IMR-90 (cell line): ENCODE measurements at regions of chr3 and their contacts with region 1.

Region 1: GRCh38 chr3:8441969-8442559 is 59.6 kb upstream of the LMCD1 start:
- DNase-seq: peak; percentile 77
- ATAC-seq: peak; percentile 30; the same call in 1 of the 2 replicates
- H3K4me3 ChIP-seq: no peak overlapping the region
- H3K27ac ChIP-seq: peak overlapping the region; percentile 40; the same call in 1 of the 2 replicates
- H3K4me1 ChIP-seq: peaks cover 21% of the 10 kb centered on the region
- H3K27me3 ChIP-seq: peaks cover 2% of the 10 kb centered on the region; the same call in 1 of the 2 replicates
- CTCF ChIP-seq: peak; percentile 84
- POLR2A ChIP-seq: no peak
- RAD21 ChIP-seq: peak; percentile 87

Region 2: DNA sequence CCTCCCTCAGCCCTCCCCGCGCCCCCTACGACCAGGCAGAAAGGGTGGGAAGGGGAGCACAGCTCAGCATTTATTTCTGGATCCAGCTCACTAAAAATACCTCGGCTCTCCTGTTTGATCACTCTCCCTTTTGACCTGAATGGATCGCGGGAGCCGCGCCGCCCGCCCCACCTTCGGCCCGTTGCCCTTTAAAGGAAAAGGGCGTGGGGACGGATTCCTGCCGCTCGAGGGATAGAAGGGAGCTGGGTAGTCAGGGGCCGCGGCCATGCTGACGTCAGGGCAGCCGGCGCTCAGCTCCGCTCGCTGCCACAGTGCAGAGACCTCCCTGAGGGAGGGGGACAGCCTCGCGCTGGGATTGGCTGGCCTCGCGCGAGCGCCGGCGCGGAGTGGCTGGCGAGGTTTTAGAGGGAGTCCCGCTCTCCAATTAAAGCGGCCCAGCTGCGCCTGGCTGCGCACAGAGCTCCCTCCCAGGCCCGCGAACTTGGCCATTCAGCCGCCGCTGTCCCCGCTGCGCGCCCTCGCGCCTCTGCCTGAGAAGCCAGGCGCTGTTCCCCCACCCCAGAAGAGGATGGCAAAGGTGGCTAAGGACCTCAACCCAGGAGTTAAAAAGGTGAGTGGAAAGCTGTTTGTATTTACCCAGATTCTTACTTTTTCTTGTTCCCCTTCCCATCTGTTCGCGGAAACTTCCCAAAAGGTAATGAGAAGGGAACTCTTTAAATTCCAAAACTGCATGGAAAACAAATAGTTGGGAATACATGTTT is 59.5 kb after region 1 on chr3 and contains the start of gene LMCD1:
- CTCF ChIA-PET with region 1: interaction called, 3 read pairs
- POLR2A ChIA-PET with region 1: interaction called, 3 read pairs
- dilution Hi-C with region 1: no loop called
- in situ Hi-C with region 1: no loop called
- intact Hi-C with region 1: loop called (anchors 1 kb)
- DNase-seq: peak; percentile 95
- ATAC-seq: peak; percentile 97
- H3K4me3 ChIP-seq: peak within 1 kb of the TSS; percentile 56
- H3K27ac ChIP-seq: peak within 1 kb of the TSS; percentile 95
- H3K4me1 ChIP-seq: peaks cover 24% of the 10 kb centered on the region
- H3K27me3 ChIP-seq: no peaks in the 10 kb centered on the region
- CTCF ChIP-seq: peak; percentile 27; the same call in 1 of the 2 replicates
- POLR2A ChIP-seq: peak; percentile 90
- RAD21 ChIP-seq: no peak; the same call in 1 of the 2 replicates
- total RNA-seq, gene LMCD1: 33.6 and 50.0 TPM in 2 replicates

Region 3: DNA sequence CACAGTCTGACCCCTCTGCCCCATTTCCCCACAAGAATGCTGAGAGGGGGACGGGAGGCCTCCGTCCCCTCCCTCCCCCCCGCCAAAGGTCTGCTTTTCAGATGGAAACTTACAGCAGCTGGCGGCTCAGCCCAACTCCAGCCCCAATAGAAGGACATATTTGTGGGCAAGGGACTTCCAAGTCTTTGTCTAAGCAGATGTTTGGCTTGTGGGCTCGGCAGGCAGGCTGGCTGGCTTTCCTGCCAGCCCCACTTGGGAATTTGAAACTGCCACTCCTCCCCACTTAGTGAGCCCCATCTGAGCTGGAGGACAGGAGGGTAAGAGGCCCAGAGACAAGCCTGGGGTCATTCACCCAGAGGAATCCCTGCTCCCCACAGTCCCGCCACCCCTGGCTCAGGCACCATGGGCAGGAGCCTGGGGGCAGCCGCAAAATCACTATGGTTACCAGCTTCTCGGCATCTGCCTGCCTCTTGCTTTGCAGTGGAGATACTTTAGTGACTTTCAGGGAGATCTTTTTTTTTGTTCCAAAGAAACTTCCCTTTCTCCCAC is 113.1 kb after region 1 on chr3:
- CTCF ChIA-PET with region 1: no interaction called
- POLR2A ChIA-PET with region 1: no interaction called
- dilution Hi-C with region 1: no loop called
- in situ Hi-C with region 1: no loop called
- intact Hi-C with region 1: loop called (anchors 5 kb)
- DNase-seq: peak; percentile 87
- ATAC-seq: peak; percentile 73
- H3K4me3 ChIP-seq: no peak overlapping the region
- H3K27ac ChIP-seq: peak overlapping the region; percentile 90
- H3K4me1 ChIP-seq: peaks cover 24% of the 10 kb centered on the region
- H3K27me3 ChIP-seq: no peaks in the 10 kb centered on the region
- CTCF ChIP-seq: no peak
- POLR2A ChIP-seq: no peak
- RAD21 ChIP-seq: no peak

Region 4: GRCh38 chr3:8607234-8608040 is 165.4 kb after region 1 on chr3:
- CTCF ChIA-PET with region 1: interaction called, 6 read pairs
- POLR2A ChIA-PET with region 1: no interaction called
- dilution Hi-C with region 1: no loop called
- in situ Hi-C with region 1: no loop called
- intact Hi-C with region 1: loop called (anchors 1 kb)
- DNase-seq: peak; percentile 78
- ATAC-seq: peak; percentile 91
- H3K4me3 ChIP-seq: no peak overlapping the region
- H3K27ac ChIP-seq: no peak overlapping the region
- H3K4me1 ChIP-seq: peaks cover 7% of the 10 kb centered on the region
- H3K27me3 ChIP-seq: no peaks in the 10 kb centered on the region
- CTCF ChIP-seq: peak; percentile 77
- POLR2A ChIP-seq: no peak
- RAD21 ChIP-seq: peak; percentile 90

Region 5: GRCh38 chr3:8741581-8742261 is 299.7 kb after region 1 on chr3:
- CTCF ChIA-PET with region 1: no interaction called
- POLR2A ChIA-PET with region 1: no interaction called
- dilution Hi-C with region 1: no loop called
- in situ Hi-C with region 1: loop called (anchors 25 kb)
- intact Hi-C with region 1: no loop called
- DNase-seq: peak; percentile 86
- ATAC-seq: peak; percentile 82
- H3K4me3 ChIP-seq: no peak overlapping the region
- H3K27ac ChIP-seq: peak overlapping the region; percentile 2; the same call in 1 of the 2 replicates
- H3K4me1 ChIP-seq: peaks cover 17% of the 10 kb centered on the region
- H3K27me3 ChIP-seq: no peaks in the 10 kb centered on the region
- CTCF ChIP-seq: no peak
- POLR2A ChIP-seq: no peak
- RAD21 ChIP-seq: no peak

Region 6: DNA sequence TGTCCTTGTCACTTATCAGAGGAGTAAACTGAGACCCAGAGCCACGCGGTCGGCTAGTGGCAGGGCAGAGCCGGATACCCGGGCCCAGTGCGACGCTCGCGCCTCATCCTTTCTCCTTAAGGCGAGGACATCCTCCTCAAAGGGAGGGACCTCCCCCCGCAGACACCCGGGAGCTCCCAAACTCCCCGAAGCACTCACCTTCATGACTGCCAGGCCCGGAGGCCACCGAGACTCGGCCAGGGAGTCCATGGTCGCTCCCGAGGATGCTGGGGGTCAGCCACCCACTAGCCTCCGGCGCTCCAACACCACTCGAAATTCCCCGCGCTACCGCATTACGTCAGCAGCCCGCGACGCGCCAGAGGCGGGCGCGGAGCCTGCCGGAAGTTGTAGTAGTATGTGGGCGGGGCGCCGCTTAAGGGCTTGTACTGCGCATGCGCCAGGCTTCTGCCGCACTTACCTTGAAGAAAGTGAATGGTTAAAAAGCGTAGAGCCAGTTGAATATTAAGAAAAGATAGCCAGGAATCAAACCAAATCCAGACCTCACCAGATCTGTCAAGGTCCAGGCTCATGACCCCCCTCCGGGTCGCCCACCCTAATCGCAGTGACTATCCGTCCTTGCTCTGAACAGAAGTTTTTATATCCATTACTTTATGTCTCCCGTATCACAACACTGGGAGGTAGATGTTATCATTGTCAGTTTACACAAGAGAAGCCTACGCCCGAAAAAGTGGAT is 521.2 kb after region 1 on chr3 and contains the start of gene RAD18:
- CTCF ChIA-PET with region 1: no interaction called
- POLR2A ChIA-PET with region 1: no interaction called
- dilution Hi-C with region 1: no loop called
- in situ Hi-C with region 1: no loop called
- intact Hi-C with region 1: loop called (anchors 10 kb)
- DNase-seq: peak; percentile 89
- ATAC-seq: peak; percentile 97
- H3K4me3 ChIP-seq: peak within 1 kb of the TSS; percentile 78
- H3K27ac ChIP-seq: peak within 1 kb of the TSS; percentile 55
- H3K4me1 ChIP-seq: peaks cover 5% of the 10 kb centered on the region
- H3K27me3 ChIP-seq: 0 out of 2 replicates have a peak, but pooled peaks cover 2% of the 10 kb centered on the region
- CTCF ChIP-seq: no peak
- POLR2A ChIP-seq: peak; percentile 57
- RAD21 ChIP-seq: no peak
- total RNA-seq, gene RAD18: 17.2 and 22.2 TPM in 2 replicates